ENCODE measurements at regions of chr10 and their contacts with region 1.

Region 1: DNA sequence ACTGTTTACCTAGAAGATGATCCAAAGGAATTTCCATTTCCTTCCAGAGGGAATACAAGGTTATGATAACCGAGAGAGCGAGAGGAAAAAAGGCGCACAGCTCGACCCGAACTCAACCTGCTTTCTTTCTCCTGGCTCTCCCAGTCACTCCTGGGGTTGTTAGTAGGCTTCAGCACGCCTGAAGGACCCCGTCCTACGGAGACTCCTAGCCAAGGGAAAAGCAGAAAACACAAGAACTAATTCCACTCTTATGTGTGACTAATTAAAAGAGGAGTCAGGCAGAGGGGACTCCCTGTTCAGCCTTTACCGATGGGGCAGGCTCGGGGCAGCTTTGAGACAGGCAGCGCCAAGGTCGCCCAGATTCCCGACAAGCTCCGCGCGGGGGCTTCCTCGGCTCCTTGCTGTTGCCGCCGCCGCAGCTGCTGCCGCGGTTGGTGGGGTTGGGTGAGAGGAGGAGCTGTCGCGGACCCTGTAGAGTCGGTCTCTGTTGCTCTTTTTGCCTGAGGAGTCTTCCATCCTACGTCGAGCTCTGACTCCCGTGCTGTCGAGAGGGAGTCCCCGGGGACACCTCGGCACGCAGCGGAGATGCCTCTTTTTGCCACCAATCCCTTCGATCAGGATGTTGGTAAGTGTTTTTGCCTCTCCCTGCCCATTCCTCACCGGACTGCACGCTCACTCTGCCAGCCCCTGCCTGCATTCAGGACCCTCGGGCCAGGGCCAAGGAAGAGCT is at the start of gene STAM:
- DNase-seq: peak; percentile 60
- H3K4me3 ChIP-seq: peak within 1 kb of the TSS; percentile 72
- H3K27me3 ChIP-seq: no peaks in the 10 kb centered on the region
- CTCF ChIP-seq: no peak
- polyA plus RNA-seq, gene STAM: 22.0 and 27.9 TPM in 2 replicates

Region 2: GRCh38 chr10:17128261-17128660 is 515.7 kb before region 1 on chr10:
- CTCF ChIA-PET with region 1: no interaction called
- POLR2A ChIA-PET with region 1: no interaction called
- DNase-seq: no peak
- H3K4me3 ChIP-seq: no peak overlapping the region
- H3K27me3 ChIP-seq: no peaks in the 10 kb centered on the region
- CTCF ChIP-seq: no peak

Region 3: DNA sequence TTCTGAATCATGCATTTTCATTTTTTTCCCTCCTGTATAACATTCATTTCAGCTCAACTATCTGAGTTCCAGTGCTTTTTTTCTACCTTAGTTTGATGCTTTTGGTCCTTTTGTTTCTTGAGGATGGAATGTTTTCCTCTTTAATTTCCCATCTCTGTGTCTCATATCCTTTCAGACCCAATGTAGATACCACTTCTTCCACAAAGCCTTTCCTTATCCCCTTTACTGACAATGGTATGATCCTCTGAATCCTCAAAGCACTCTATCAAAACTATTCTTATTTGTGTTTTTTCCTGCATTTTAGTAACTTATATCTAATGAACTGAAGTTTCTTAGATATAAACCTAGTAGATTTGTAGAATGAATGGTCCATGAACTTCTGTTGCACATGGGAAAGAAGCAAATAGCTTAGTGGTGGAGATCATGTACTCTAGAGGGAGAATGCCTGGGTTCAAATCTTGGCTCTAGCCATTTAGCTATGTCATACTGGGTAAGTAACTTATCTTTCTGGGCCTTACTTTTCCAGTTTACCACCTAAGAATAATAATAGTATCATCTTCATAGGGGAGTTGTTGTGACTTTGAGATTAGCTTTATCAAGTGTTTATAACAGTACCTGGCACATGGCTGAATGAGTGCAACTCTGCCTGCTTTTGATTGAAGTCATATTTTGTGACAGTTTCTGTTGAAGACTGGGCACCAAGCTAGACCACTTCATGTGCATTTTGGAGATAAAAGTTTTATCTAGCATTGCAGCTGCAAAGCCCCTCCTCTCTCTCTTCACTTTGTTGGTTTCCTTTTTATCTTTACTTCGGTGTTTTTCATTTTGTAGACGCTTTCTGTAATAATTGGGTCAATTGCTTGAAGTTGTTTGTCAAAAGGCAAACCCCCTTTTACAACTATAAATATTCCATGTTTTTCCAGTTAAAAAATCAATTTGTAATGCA is 18.5 kb after region 1 on chr10:
- CTCF ChIA-PET with region 1: interaction called, 10 read pairs
- POLR2A ChIA-PET with region 1: interaction called, 8 read pairs
- DNase-seq: no peak
- H3K4me3 ChIP-seq: no peak overlapping the region
- H3K27me3 ChIP-seq: no peaks in the 10 kb centered on the region
- CTCF ChIP-seq: no peak

Region 4: DNA sequence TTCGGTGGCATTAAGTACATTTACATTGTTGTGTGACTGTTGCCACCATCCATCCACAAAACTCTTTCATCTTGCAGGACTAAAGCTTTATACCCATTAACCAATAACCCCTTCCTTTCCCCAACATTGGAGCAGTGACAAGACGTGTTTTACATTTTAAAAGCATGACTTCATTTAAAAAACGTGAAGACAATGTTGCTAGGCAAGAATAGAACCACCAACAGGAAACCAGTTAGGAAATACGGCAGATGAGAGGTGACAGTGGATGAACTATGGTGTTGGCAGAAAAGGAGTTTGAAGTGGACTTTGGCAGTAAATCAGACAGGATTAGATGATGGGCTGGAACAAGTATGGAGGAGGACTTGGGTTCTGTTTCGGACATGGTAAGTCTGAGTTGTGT is 125.0 kb after region 1 on chr10:
- CTCF ChIA-PET with region 1: no interaction called
- POLR2A ChIA-PET with region 1: no interaction called
- DNase-seq: no peak
- H3K4me3 ChIP-seq: no peak overlapping the region
- H3K27me3 ChIP-seq: no peaks in the 10 kb centered on the region
- CTCF ChIP-seq: no peak

Measured in BJ (cell line).